ENCODE measurements at regions of chr9 and their contacts with region 1.

Region 1: GRCh38 chr9:35553670-35554543 is 51.2 kb upstream of the TESK1 start:
- DNase-seq: peak; percentile 83 to 89
- H3K4me3 ChIP-seq: no peak overlapping the region
- H3K27ac ChIP-seq: peak overlapping the region; percentile 77 to 93
- H3K4me1 ChIP-seq: peaks cover 4 to 70% (median 49%) of the 10 kb centered on the region in 4 donors
- H3K27me3 ChIP-seq: no peaks in the 10 kb centered on the region
- CTCF ChIP-seq: peak; percentile 89 to 91

Region 2: GRCh38 chr9:35350827-35351549 is 202.9 kb before region 1 on chr9:
- intact Hi-C with region 1: no loop called
- DNase-seq: no peak
- H3K4me3 ChIP-seq: no peak overlapping the region
- H3K27ac ChIP-seq: peak overlapping the region; percentile 21 to 23
- H3K4me1 ChIP-seq: peaks cover 0 to 24% (median 10%) of the 10 kb centered on the region in 4 donors
- H3K27me3 ChIP-seq: no peaks in the 10 kb centered on the region
- CTCF ChIP-seq: no peak

Region 3: DNA sequence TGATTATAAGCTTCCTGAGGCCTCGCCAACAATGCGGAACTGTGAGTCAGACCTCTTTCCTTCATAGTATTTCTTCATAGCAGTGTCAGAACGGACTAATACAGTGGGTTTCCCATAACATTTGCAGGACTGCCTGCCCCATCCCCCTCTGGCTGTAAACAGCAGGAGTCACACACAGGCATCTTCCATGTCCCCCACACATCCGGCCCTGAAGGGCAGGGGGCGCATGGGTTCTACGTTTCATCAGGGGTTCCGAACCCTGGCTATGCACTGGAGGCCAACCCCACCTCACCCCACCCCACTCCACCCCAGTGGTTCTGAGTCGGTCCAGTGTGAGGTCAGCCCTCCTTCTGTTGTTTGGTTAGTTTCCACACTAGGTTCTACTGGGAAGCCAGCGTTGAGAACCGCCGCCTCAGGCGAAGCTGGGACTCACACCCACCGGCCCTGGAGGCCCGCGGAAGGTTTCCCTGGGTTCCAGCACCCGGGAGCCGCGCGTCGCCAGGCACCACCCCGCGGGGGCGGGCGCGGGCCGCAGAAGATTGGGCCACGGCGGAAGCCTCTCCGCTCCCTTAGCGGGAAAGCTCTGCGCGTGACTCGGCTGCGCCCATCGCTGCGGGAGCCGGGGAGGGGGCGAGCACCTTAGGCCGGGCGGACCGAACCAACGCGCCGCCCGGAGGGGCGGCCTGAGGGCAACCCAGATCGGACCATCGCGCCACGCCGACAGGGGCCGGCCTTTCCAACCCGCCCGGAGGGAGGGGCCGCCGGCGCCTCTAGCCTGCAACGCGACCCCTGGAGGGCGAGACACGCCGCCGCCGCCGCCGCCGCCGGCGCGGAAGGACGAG is 64.4 kb before region 1 on chr9 and contains the start of gene RUSC2:
- intact Hi-C with region 1: loop called (anchors 1 kb)
- DNase-seq: peak; percentile 81 to 93
- H3K4me3 ChIP-seq: peak within 1 kb of the TSS; percentile 87 to 98
- H3K27ac ChIP-seq: peak within 1 kb of the TSS; percentile 96 to 99
- H3K4me1 ChIP-seq: peaks cover 0 to 26% (median 13%) of the 10 kb centered on the region in 4 donors
- H3K27me3 ChIP-seq: no peaks in the 10 kb centered on the region
- CTCF ChIP-seq: peak; percentile 48 to 68

Measured in tibial artery (tissue), 4 donors.